Mammary epithelial cell (primary cell): ENCODE measurements at regions of chr3 and their contacts with region 1.

Region 1: DNA sequence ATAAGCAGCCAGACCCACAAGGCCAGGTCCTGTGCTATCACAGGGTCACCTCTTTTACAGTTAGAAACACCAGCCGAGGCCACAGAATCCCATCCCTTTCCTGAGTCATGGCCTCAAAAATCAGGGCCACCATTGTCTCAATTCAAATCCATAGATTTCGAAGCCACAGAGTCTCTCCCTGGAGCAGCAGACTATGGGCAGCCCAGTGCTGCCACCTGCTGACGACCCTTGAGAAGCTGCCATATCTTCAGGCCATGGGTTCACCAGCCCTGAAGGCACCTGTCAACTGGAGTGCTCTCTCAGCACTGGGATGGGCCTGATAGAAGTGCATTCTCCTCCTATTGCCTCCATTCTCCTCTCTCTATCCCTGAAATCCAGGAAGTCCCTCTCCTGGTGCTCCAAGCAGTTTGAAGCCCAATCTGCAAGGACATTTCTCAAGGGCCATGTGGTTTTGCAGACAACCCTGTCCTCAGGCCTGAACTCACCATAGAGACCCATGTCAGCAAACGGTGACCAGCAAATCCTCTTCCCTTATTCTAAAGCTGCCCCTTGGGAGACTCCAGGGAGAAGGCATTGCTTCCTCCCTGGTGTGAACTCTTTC is 39.6 kb downstream of the TGM4 start:
- DNase-seq: peak; percentile 68
- H3K4me3 ChIP-seq: no peak overlapping the region
- H3K27ac ChIP-seq: no peak overlapping the region
- H3K4me1 ChIP-seq: no peaks in the 10 kb centered on the region
- H3K27me3 ChIP-seq: no peaks in the 10 kb centered on the region
- CTCF ChIP-seq: peak; percentile 84 to 91

Region 2: GRCh38 chr3:44510000-44510368 is 404.0 kb before region 1 on chr3:
- CTCF ChIA-PET with region 1: no interaction called
- dilution Hi-C with region 1: no loop called
- in situ Hi-C with region 1: loop called in 1 of 2 experiments (anchors 25 kb)
- intact Hi-C with region 1: no loop called
- DNase-seq: peak; percentile 10
- H3K4me3 ChIP-seq: peak overlapping the region; percentile 75 to 100 (median 96)
- H3K27ac ChIP-seq: peak overlapping the region; percentile 73
- H3K4me1 ChIP-seq: peaks cover 6% of the 10 kb centered on the region
- H3K27me3 ChIP-seq: no peaks in the 10 kb centered on the region
- CTCF ChIP-seq: no peak

Region 3: GRCh38 chr3:44648564-44649229 is 265.3 kb before region 1 on chr3 and contains the start of gene ZNF35:
- CTCF ChIA-PET with region 1: no interaction called
- dilution Hi-C with region 1: no loop called
- in situ Hi-C with region 1: no loop called
- intact Hi-C with region 1: loop called (anchors 2 kb)
- DNase-seq: peak; percentile 85
- H3K4me3 ChIP-seq: peak within 1 kb of the TSS; percentile 91 to 94 (median 94)
- H3K27ac ChIP-seq: peak within 1 kb of the TSS; percentile 52
- H3K4me1 ChIP-seq: no peaks in the 10 kb centered on the region
- H3K27me3 ChIP-seq: no peaks in the 10 kb centered on the region
- CTCF ChIP-seq: no peak
- total RNA-seq, gene ZNF35: 11.5 to 16.3 TPM

Region 4: DNA sequence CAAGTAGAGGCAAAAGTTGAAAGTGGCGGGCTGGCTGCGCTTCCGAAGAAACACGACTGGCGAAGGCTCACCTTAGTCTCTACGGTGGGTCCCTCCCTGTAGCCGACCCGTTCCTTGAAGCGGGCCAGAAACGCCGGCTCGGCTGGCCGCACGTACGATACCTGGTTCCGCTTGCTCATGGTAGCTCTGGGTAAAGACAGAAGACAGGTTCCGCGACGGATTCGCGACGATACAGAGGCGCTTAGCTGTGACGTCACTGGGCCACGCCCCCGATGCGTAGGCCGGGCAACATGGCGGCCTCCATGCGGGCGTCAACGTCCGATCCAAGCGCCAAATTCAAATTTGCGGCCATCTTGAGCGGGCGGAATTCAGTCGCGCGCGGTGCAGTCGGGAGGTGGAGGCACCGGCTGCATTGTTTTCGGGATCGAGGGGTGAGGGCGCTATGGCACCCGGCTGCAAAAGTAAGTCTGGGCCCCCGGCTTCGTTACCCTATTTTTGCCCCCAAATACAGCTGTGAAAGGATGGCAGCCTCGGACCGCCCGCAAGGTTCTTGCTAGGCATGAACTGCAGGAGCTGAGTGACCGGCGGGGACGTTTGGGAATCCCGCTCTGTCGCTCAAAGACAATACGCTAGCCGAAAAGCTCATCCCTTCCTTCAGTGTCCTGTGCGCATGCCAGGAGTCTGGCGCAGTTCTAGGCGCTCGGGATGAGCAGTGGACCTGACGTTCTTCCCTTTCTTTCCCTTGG is 152.4 kb before region 1 on chr3 and contains the starts of genes KIAA1143 and KIF15:
- CTCF ChIA-PET with region 1: no interaction called
- dilution Hi-C with region 1: no loop called
- in situ Hi-C with region 1: no loop called
- intact Hi-C with region 1: loop called (anchors 1 kb)
- DNase-seq: peak; percentile 92
- H3K4me3 ChIP-seq: peak within 1 kb of the TSS; percentile 72 to 97 (median 88)
- H3K27ac ChIP-seq: peak within 1 kb of the TSS; percentile 96
- H3K4me1 ChIP-seq: peaks cover 7% of the 10 kb centered on the region
- H3K27me3 ChIP-seq: no peaks in the 10 kb centered on the region
- CTCF ChIP-seq: peak in 1 of 2 donors; percentile 8
- total RNA-seq, gene KIAA1143: 21.3 to 25.3 TPM
- total RNA-seq, gene KIF15: 0.67 to 7.7 TPM

Region 5: DNA sequence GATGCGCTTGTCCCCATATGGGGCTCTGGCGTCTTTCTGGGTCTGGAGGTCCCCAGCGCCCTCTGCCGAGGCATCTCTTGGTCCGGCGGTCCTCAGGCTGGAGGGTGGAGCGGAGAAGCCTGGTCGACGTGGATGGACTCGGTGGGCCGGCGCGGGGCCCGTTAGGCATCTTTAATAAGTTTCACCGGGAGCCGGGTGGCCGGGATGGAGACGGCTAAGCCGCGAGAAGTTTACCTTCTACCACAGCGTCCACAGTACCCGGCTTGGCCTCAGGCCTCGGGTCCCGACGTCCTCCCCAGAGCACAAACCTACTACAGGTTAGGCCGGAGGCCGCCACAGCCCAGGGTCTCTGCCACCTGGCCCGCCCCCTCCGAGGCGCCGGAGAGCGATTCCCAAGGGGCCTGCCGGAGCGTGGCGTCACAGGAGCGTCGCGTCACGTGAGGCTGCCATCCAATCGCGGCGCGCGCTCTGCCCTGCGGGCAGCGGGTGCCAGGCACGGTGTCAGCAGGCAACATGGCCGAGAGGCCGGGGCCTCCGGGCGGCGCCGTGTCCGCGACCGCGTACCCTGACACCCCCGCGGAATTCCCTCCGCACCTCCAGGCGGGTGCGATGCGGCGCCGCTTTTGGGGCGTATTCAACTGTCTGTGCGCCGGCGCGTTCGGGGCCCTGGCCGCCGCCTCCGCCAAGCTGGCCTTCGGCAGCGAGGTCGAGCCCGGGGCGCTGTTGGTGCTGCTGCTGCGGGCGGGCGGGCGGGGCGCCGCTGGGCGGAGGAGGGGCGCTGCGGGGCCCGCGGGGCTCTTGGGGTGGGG is 52.4 kb before region 1 on chr3 and contains the start of gene TMEM42:
- CTCF ChIA-PET with region 1: no interaction called
- dilution Hi-C with region 1: no loop called
- in situ Hi-C with region 1: no loop called
- intact Hi-C with region 1: loop called (anchors 1 kb)
- DNase-seq: peak; percentile 73
- H3K4me3 ChIP-seq: peak within 1 kb of the TSS; percentile 15 to 57 (median 43)
- H3K27ac ChIP-seq: no peak within 1 kb of the TSS
- H3K4me1 ChIP-seq: peaks cover 4% of the 10 kb centered on the region
- H3K27me3 ChIP-seq: no peaks in the 10 kb centered on the region
- CTCF ChIP-seq: no peak
- total RNA-seq, gene TMEM42: 11.8 to 12.9 TPM

Region 6: GRCh38 chr3:45011756-45012508 is 98.0 kb after region 1 on chr3:
- CTCF ChIA-PET with region 1: no interaction called
- dilution Hi-C with region 1: no loop called
- in situ Hi-C with region 1: no loop called
- intact Hi-C with region 1: loop called (anchors 5 kb)
- DNase-seq: peak; percentile 63
- H3K4me3 ChIP-seq: peak overlapping the region in 1 of 3 experiments; percentile 8
- H3K27ac ChIP-seq: peak overlapping the region; percentile 62
- H3K4me1 ChIP-seq: peaks cover 36% of the 10 kb centered on the region
- H3K27me3 ChIP-seq: no peaks in the 10 kb centered on the region
- CTCF ChIP-seq: no peak

Region 7: DNA sequence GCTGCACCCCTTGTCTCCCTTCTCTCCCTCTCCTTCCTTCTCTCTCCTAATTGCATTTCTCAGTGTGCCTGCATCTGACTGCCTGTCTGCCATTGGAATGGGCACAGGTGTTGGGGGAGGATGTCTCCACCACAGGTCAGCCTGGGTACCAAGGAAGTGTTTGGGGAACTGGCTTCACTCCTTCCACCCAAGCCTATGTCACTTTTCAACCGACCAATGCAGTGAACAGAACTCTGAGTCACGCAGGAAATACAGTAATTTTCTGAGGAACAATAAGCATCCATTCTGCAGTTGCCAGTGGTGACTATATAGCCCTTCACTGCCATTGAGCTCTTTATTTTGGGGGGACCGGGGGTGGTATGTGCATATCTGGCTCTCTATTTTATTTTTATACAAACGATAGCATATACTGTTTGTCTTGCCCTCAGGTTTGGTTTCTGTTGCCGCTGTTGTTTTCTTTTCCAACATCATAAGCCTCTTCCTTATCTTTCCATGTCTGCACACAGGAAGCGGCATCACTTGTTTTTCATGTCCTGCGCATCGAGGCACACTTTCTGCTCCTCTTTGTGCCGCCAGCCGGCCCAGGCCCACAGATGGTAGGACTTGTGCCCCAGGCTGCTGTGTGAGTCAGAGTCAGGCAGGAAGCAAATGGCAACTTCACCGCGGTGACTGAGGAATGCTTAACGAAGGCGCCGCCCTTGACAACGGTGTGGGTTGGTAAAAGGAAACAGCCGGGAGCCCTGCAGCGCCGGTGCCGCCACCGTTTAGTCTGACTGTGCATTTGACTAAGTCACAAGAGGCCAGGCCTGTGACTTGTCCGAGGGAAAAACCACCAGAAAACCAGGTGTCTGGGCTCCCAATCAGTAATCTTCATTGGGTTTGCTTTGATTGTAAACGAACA is 253.3 kb after region 1 on chr3:
- CTCF ChIA-PET with region 1: no interaction called
- dilution Hi-C with region 1: no loop called
- in situ Hi-C with region 1: no loop called
- intact Hi-C with region 1: no loop called
- DNase-seq: peak; percentile 98
- H3K4me3 ChIP-seq: no peak overlapping the region
- H3K27ac ChIP-seq: peak overlapping the region; percentile 96
- H3K4me1 ChIP-seq: peaks cover 25% of the 10 kb centered on the region
- H3K27me3 ChIP-seq: no peaks in the 10 kb centered on the region
- CTCF ChIP-seq: no peak